Gastrocnemius medialis (tissue), 4 donors: ENCODE measurements at regions of chr4 and their contacts with region 1.

Region 1: DNA sequence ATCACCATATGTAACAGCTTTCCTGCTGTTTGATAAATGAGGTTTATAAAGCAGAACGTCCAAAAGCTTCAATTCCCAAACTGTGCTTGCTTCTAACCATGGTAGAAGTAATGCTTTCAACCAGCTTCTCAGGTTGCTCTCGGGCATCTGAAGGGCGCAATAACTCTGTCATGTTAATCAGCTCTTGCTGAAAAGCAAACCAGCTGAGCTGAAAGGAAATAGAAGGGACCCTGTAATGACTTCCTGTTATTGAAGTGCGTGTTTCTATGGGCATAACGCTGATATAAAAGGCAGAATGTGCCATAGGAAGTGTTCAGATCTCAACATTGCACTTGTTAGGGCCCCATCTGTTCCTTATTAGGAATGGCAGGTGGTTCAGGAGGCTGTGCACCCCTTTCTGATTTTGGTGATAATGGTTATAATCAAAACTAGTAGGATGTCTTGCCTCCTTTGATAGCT is 21.2 kb downstream of the HERC3 start:
- DNase-seq: peak; percentile 23 to 39
- ATAC-seq: peak; percentile 52 to 63
- H3K4me3 ChIP-seq: no peak overlapping the region
- H3K27ac ChIP-seq: peak overlapping the region; percentile 75 to 86 (median 79)
- H3K4me1 ChIP-seq: peaks cover 71 to 84% of the 10 kb centered on the region in 2 donors
- H3K27me3 ChIP-seq: no peaks in the 10 kb centered on the region
- CTCF ChIP-seq: no peak
- POLR2A ChIP-seq: no peak

Region 2: GRCh38 chr4:88706574-88706973 is 93.1 kb after region 1 on chr4:
- in situ Hi-C with region 1: no loop called
- intact Hi-C with region 1: no loop called
- DNase-seq: peak; percentile 23 to 62
- ATAC-seq: peak; percentile 98
- H3K4me3 ChIP-seq: no peak overlapping the region
- H3K27ac ChIP-seq: peak overlapping the region; percentile 61 to 75 (median 70)
- H3K4me1 ChIP-seq: peaks cover 5 to 12% of the 10 kb centered on the region in 2 donors
- H3K27me3 ChIP-seq: no peaks in the 10 kb centered on the region
- CTCF ChIP-seq: peak; percentile 40 to 73 (median 62)
- POLR2A ChIP-seq: no peak

Region 3: DNA sequence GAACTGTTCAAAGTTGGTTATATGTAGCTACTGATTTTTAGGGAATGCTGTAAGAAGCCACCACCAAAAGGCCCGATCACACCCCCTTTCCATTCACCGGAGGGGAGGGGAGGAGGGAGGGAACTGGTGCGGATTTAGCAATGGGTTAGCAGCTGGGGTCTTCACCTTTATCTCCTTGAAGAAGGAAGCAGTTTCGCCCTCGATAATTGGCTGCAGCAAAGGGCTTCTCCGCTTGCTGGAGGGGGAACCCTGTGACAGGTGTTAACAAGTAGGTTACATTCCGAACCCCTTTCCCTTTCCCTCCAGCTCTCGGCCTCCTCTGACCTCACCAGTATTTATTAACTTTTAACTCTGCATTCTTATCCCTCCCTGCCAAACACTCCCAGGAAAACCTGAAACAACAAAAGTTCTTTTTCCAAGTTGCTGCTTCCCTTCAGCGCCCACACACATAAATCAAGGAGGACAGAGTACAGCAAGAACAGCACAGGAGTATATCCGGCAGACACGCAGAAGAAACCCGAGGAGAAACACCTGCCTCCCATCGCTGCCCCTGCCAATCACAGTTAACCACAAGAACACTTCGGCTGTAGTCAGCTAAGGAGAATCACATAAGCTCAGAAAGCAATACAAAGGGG is 124.0 kb after region 1 on chr4:
- in situ Hi-C with region 1: no loop called
- intact Hi-C with region 1: loop called (anchors 5 kb)
- DNase-seq: peak; percentile 72 to 91
- ATAC-seq: peak; percentile 94 to 97
- H3K4me3 ChIP-seq: peak overlapping the region; percentile 37 to 52 (median 46)
- H3K27ac ChIP-seq: peak overlapping the region; percentile 79 to 90 (median 86)
- H3K4me1 ChIP-seq: peaks cover 39 to 40% of the 10 kb centered on the region in 2 donors
- H3K27me3 ChIP-seq: no peaks in the 10 kb centered on the region
- CTCF ChIP-seq: no peak
- POLR2A ChIP-seq: no peak

Region 4: GRCh38 chr4:88792268-88792781 is 178.9 kb after region 1 on chr4:
- in situ Hi-C with region 1: no loop called
- intact Hi-C with region 1: loop called (anchors 10 kb)
- DNase-seq: no peak
- ATAC-seq: peak in 1 of 2 donors; percentile 8
- H3K4me3 ChIP-seq: no peak overlapping the region
- H3K27ac ChIP-seq: peak overlapping the region in 1 of 4 donors; percentile 3
- H3K4me1 ChIP-seq: peaks cover 0 to 3% of the 10 kb centered on the region in 2 donors
- H3K27me3 ChIP-seq: no peaks in the 10 kb centered on the region
- CTCF ChIP-seq: no peak
- POLR2A ChIP-seq: no peak